ENCODE measurements at regions of chr17 and their contacts with region 1.

Region 1: DNA sequence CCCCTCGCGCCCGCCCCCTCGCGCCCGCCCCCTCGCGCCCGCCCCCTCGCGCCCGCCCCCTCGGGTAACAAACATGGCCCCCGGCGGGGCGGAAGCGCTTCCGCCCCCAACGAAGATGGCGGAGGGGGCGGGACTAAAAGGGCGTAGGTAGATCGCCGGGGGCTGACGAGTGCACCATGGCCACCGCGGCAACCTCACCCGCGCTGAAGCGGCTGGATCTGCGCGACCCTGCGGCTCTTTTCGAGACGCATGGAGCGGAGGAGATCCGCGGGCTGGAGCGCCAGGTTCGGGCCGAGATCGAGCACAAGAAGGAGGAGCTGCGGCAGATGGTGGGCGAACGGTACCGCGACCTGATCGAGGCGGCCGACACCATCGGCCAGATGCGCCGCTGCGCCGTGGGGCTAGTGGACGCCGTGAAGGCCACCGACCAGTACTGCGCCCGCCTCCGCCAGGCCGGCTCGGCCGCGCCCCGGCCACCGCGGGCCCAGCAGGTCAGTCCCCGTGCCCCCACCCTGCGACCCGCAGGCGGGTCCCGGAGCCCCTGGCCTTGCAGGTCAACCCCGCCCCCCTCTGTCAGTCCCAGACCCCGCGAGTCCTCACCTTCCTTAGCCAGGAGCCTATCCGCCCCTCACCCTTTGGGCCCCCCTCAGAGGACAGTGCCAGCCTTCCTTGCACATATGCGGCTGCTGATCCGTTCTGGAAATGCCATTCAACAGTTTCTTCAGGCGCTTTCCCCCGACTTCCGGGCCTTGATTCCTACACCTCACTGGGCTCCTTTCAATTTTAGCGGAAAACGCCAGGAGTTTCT is at the start of gene COG1:
- DNase-seq: peak; percentile 88 to 96 (median 91)
- ATAC-seq: peak; percentile 89 to 91
- H3K4me3 ChIP-seq: peak within 1 kb of the TSS; percentile 95
- H3K27ac ChIP-seq: peak within 1 kb of the TSS; percentile 90
- H3K4me1 ChIP-seq: peaks cover 5% of the 10 kb centered on the region
- H3K27me3 ChIP-seq: no peaks in the 10 kb centered on the region
- total RNA-seq, gene COG1: 38.5 to 51.4 (median 43.2) TPM

Region 2: DNA sequence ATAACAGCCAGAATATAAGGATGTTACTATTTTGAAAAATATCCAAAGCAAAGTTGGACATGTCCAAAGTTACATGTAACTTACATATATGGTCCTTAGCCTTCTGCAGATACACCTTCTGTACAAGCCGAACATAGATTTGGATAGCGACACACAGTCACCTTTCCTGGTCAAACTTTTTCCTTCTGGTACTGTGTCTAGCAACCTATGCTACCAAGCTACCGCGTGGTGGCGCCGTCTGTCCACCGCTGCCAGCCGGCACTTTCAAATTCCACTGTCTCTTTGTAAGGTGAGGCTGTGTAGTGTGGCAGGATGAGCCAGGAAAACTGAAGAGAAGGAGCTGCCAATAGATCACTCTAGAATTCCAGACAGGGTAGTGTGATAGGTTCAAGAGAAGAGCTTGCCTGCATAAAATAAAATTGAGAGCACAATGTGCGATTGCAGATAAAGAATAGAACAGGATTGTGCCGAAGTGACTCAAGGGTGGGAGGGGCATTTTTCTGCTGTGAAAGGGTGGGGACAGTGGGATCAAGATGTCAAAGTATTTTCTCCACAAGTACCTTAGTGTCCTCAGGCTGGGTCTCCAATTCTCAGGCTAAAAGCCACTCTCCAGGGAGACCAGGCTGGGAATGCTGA is 467.5 kb before region 1 on chr17:
- intact Hi-C with region 1: loop called in 3 of 4 experiments (anchors 5 to 10 kb)
- DNase-seq: peak; percentile 41 to 71 (median 58)
- ATAC-seq: peak; percentile 55 to 77
- H3K4me3 ChIP-seq: no peak overlapping the region
- H3K27ac ChIP-seq: no peak overlapping the region
- H3K4me1 ChIP-seq: no peaks in the 10 kb centered on the region
- H3K27me3 ChIP-seq: no peaks in the 10 kb centered on the region

Region 3: GRCh38 chr17:73118951-73119391 is 74.1 kb before region 1 on chr17:
- intact Hi-C with region 1: loop called in 1 of 4 experiments (anchors 10 kb)
- DNase-seq: no peak
- ATAC-seq: no peak
- H3K4me3 ChIP-seq: no peak overlapping the region
- H3K27ac ChIP-seq: no peak overlapping the region
- H3K4me1 ChIP-seq: no peaks in the 10 kb centered on the region
- H3K27me3 ChIP-seq: no peaks in the 10 kb centered on the region

Region 4: DNA sequence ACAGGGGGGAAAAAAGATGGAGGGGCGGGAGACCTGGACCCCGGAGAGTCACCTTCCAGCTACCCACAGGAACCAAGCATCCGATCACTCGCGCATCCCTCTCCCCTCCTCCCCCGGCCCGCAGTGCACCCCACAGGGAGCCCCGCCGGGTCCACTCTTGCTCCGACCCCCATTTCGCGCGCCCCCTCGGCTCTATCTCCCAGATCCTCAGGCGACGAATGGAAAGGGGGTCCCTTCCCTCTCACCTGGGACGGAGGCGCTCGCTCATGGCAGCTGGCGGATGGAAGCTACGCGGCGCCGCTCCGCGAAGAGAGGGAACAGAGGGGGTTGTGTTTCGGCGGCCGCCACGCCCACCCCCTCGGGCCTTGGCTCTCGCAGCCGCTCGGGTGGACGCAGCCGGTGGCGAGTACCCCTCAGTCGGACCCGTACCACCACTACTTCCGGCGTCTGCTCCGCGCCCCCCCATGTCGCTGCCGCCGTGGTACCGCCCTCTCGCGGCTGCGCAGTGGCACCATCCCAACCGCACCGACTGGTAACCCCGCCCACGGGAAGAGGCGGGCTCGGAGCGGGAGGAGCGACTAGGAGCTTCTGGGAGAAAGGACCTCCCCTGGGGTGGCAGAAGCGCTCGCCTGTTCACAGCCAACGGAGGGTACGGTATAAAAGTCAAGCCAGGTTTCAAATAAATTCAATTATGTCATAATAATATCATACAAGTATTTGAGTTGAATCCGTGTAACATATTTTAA is 38.9 kb after region 1 on chr17:
- intact Hi-C with region 1: loop called in 1 of 4 experiments (anchors 5 kb)
- DNase-seq: peak; percentile 97 to 99 (median 98)
- ATAC-seq: peak; percentile 97
- H3K4me3 ChIP-seq: peak overlapping the region; percentile 80
- H3K27ac ChIP-seq: peak overlapping the region; percentile 55
- H3K4me1 ChIP-seq: no peaks in the 10 kb centered on the region
- H3K27me3 ChIP-seq: no peaks in the 10 kb centered on the region

Region 5: DNA sequence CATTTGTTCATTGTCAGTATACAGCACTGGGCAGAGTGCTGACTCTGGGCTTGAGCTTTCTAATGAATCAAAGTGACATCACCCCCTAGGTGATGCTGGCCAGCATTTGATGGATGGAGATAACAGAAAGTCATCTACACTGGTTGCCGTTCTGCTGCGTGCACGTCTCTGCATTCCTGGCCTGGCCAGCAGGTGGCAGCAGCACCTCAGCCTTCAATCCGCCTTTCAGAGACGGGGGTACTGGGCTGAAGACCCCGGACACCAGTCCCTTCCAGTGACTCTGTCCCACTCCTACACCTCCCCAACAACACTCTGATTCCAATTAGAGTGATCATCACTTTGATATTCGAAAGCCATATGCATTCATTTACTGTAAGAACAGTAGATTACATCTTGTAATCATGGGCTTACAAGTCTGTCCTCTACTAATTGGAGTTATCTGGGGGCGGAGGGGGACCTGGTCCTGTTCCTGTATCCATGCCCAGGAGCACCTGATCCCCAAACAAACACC is 62.6 kb after region 1 on chr17:
- intact Hi-C with region 1: loop called in 1 of 4 experiments (anchors 10 kb)
- DNase-seq: peak; percentile 40 to 74 (median 72)
- ATAC-seq: peak; percentile 66 to 76
- H3K4me3 ChIP-seq: no peak overlapping the region
- H3K27ac ChIP-seq: no peak overlapping the region
- H3K4me1 ChIP-seq: no peaks in the 10 kb centered on the region
- H3K27me3 ChIP-seq: no peaks in the 10 kb centered on the region

Region 6: GRCh38 chr17:73271072-73271471 is 78.0 kb after region 1 on chr17:
- intact Hi-C with region 1: no loop called
- DNase-seq: peak in 1 of 3 donors; percentile 6
- ATAC-seq: peak in 1 of 2 donors; percentile 14
- H3K4me3 ChIP-seq: no peak overlapping the region
- H3K27ac ChIP-seq: no peak overlapping the region
- H3K4me1 ChIP-seq: no peaks in the 10 kb centered on the region
- H3K27me3 ChIP-seq: no peaks in the 10 kb centered on the region